Right cardiac atrium (tissue), 5 donors: ENCODE measurements at regions of chr19 and their contacts with region 1.

Region 1: DNA sequence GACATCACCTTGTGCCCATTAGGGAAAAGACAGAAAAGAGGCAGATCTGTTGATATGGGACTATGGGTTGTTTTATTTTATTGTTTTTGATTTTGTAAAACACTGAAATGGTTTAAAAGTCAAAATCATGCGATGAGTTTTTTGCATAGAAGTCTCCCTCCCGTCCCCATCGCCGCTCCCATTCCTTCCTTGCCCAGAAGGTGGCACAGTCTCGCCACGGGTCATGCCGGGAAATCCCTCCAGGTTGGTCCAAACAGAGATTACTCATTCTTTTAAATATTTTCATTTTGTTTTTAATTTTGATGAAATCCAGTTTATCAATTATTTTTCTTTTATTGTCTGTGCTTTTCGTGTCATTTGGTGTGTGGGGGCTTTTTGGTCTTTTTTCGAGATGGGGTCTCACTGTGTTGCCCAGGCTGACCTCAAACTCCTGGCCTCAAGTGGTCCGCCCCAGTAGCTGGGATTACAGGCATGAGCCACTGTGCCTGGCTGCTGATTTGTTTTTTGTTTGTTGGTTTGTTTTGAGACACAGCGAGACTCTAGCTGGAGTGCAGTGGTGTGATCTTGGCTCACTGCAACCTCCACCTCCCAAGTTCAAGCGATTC is 9.2 kb downstream of the PGPEP1 start:
- DNase-seq: peak; percentile 34 to 76 (median 69)
- ATAC-seq: peak in 1 of 2 donors; percentile 66
- H3K4me3 ChIP-seq: no peak overlapping the region
- H3K27ac ChIP-seq: no peak overlapping the region
- H3K4me1 ChIP-seq: no peaks in the 10 kb centered on the region
- H3K27me3 ChIP-seq: no peaks in the 10 kb centered on the region

Region 2: DNA sequence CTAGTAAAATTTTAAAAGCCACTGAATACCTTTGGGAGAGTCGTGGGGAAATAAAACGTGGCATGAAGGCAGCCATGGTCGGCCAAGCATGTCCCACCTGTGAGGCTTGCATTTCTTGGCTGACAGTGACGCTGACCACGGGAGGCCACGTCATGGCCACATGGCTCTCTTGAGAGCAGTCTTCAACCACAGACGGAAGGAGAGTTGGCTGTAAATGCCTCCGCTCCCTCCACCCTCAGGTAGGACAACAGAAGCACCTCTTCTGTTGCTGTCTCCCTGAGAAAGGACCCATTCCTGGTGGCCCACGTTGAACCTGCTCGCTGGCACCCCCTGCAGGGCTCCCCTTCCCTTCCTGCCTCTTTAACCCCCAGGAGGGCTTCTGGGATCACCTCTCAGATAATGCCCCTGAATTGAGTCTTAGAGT is 58.4 kb after region 1 on chr19:
- intact Hi-C with region 1: loop called (anchors 2 to 10 kb)
- DNase-seq: peak in 2 of 3 donors; percentile 68 to 69
- ATAC-seq: no peak
- H3K4me3 ChIP-seq: no peak overlapping the region
- H3K27ac ChIP-seq: no peak overlapping the region
- H3K4me1 ChIP-seq: no peaks in the 10 kb centered on the region
- H3K27me3 ChIP-seq: no peaks in the 10 kb centered on the region

Region 3: GRCh38 chr19:18419195-18419698 is 69.6 kb after region 1 on chr19 and contains the start of gene SSBP4:
- intact Hi-C with region 1: loop called in 2 of 4 experiments (anchors 5 kb)
- DNase-seq: peak; percentile 77 to 93 (median 93)
- ATAC-seq: peak in 1 of 2 donors; percentile 5
- H3K4me3 ChIP-seq: peak within 1 kb of the TSS; percentile 69
- H3K27ac ChIP-seq: peak within 1 kb of the TSS; percentile 62
- H3K4me1 ChIP-seq: peaks cover 12% of the 10 kb centered on the region
- H3K27me3 ChIP-seq: no peaks in the 10 kb centered on the region
- total RNA-seq, gene SSBP4: 32.7 to 40.0 (median 37.8) TPM

Region 4: DNA sequence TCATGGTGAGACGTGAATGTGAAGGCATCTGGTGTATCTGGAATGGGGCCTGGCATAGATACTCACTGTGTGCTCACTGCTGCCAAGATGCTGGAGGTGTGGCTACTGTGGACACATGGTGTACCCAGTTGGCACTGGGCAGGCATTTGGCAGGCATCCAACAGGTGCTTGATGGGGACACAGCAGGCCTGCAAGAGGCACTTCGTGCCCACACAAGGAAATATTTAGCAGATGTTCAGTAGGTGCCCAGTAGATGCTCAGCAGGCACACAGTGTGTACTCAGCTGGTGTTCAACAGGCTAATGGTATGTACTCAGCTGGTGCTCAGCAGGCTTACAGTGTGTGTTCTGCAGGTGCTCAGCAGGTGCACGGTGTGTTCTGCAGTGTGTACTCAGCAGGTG is 348.1 kb after region 1 on chr19:
- intact Hi-C with region 1: no loop called
- DNase-seq: peak in 1 of 3 donors; percentile 71
- ATAC-seq: no peak
- H3K4me3 ChIP-seq: no peak overlapping the region
- H3K27ac ChIP-seq: no peak overlapping the region
- H3K4me1 ChIP-seq: no peaks in the 10 kb centered on the region
- H3K27me3 ChIP-seq: no peaks in the 10 kb centered on the region